Upper lobe of right lung (tissue), 1 donor: ENCODE measurements at regions of chr17 and their contacts with region 1.

Region 1: GRCh38 chr17:17119533-17119932 is 77.3 kb downstream of the MPRIP start:
- DNase-seq: no peak
- ATAC-seq: peak; percentile 52
- H3K4me3 ChIP-seq: no peak overlapping the region
- H3K27ac ChIP-seq: peak overlapping the region; percentile 38
- H3K4me1 ChIP-seq: peaks cover 64% of the 10 kb centered on the region
- H3K27me3 ChIP-seq: no peaks in the 10 kb centered on the region
- CTCF ChIP-seq: no peak

Region 2: GRCh38 chr17:17001874-17002520 is 117.5 kb before region 1 on chr17:
- intact Hi-C with region 1: loop called (anchors 10 kb)
- DNase-seq: peak; percentile 91
- ATAC-seq: peak; percentile 94
- H3K4me3 ChIP-seq: no peak overlapping the region
- H3K27ac ChIP-seq: no peak overlapping the region
- H3K4me1 ChIP-seq: peaks cover 5% of the 10 kb centered on the region
- H3K27me3 ChIP-seq: no peaks in the 10 kb centered on the region
- CTCF ChIP-seq: no peak